ENCODE measurements at regions of chr22 and their contacts with region 1.

Region 1: DNA sequence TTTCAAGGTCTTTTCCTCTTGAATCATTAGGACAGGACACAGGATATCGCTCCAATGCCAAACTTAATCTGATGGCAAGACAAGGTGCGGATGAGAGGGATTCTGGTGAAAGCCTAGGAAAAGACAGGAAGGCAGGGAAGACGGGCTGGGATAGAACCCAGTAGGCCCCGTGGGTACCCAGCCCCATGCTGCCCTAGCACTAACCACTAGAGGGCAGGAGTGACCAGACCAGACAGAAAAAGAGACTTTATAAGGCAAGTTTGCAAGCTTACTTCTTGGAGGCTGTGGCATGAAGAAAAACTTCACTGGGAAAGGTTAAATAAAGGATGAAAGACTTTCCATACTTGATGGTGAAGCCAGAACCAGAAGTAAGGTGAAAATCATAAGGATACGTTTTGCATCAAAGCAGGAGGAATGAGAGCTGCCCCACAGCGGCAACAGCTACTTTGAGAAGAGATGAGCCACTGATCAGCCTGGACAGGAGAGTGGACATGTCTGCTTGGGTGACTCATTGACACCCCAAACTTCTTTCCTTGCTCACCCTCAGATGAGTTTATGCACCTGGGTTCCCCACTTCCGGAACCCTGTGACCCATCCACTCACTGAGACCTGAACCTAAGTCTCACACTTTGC is 39.8 kb downstream of the SYN3 start:
- DNase-seq: no peak
- H3K4me3 Mint-ChIP-seq: no peak overlapping the region
- H3K27ac Mint-ChIP-seq: no peak overlapping the region
- H3K4me1 Mint-ChIP-seq: no peaks in the 10 kb centered on the region
- H3K27me3 Mint-ChIP-seq: no peaks in the 10 kb centered on the region

Region 2: DNA sequence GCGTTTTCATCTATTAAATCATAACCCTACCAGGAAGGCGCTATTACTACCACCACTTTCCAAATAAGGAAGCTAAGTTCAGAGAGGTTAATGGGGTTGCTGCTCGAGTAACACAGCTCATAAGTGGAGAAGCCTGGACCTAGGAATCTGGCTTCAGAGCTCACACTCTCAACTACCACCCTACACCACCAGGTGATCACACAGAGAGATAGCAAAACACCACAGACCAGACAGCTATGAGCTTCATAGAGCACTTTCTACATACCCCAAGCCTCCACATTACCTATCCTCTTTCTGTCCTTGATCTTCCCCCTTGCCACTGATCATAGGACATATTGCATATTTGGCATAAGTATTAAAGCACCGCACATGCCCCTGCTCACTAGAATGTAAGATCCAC is 151.4 kb before region 1 on chr22:
- intact Hi-C with region 1: no loop called
- DNase-seq: no peak
- H3K4me3 Mint-ChIP-seq: no peak overlapping the region
- H3K27ac Mint-ChIP-seq: no peak overlapping the region
- H3K4me1 Mint-ChIP-seq: no peaks in the 10 kb centered on the region
- H3K27me3 Mint-ChIP-seq: no peaks in the 10 kb centered on the region

Region 3: DNA sequence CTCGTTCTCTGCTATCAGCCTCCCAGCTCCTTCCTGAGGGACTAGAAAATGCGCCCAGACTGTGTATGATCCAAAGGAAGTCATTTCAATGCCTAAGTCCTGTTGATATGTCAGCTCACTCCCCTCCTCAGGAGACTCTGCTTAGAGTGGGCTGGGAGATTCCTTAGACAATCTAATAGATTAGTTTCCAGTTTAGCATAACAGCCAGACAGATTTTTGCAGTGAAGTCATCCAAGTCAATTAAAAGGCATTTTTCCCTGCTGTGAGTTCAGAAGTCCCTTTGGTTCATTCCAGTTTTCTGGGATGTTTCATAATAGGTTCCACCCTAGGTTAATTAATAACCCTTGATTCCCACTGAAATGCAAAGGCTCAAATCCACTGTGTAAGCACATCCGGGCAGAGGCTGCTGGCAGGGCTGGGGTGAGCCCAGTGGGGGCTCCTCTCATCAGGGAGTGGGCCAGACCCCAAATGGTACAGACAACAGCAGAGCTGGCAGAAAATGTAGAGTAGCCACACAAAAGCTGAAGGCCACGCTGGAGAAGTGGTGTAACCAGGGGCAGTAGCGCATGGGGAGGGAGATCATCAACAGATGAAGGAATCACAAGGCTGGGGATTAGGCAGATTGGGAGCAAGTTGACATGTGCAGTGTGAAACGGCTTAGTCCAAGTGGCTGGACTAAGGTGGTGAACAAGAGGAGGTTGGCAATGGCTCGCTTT is 50.8 kb before region 1 on chr22:
- intact Hi-C with region 1: no loop called
- DNase-seq: no peak
- H3K4me3 Mint-ChIP-seq: no peak overlapping the region
- H3K27ac Mint-ChIP-seq: no peak overlapping the region
- H3K4me1 Mint-ChIP-seq: no peaks in the 10 kb centered on the region
- H3K27me3 Mint-ChIP-seq: no peaks in the 10 kb centered on the region

Region 4: DNA sequence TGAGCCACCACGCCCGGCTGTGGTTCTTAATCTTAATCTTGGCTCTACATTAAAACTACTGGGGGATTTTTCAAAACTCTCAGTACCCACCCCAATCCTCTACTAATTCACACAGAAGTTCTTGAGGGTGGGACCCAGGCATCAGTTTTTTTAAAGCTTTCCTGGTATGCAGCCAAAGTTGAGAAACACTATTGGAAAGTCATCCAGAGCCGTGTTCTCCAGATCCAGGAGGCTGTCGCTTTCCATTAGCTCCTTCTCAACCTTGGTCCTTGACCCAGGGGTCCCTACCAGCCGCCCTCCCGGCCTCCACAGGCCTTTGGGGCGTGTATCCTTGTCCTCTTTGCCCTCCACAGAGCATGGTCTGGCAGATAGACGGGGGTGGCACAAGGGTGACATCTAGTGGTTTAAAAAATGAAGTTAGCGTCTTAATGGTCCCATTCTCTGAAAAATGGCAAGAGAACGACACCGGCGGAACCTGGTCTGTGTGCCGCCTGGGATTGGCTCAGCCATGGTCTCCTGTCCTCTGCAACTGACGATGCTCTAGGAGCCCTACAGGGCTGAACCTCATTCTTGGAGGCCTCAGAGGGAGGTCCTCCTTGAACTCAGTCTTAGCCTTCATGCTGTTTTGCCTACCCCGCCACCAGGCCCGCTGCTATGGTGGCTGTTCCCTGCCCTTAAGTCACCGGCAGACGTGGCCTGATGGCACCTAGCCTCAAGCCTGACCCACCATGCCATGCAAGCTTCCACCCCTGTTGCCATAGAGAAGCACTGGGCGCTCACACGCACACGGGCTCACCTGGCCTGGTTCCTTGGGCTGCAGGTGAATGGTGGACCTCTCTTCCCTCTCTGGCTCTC is 191.8 kb after region 1 on chr22:
- intact Hi-C with region 1: loop called (anchors 5 kb)
- DNase-seq: no peak
- H3K4me3 Mint-ChIP-seq: no peak overlapping the region
- H3K27ac Mint-ChIP-seq: no peak overlapping the region
- H3K4me1 Mint-ChIP-seq: no peaks in the 10 kb centered on the region
- H3K27me3 Mint-ChIP-seq: no peaks in the 10 kb centered on the region

Measured in activated T-helper 2 cell treated with anti-CD3 and anti-CD28 coated beads, Interferon-gamma antibody, Interleukin-2, Interleukin-4, amounts not matched to agents 10 μg/mL and 5 μg/mL and 100 μg/mL, durations not matched to agents 14 hours and 24 hours and 36 hours (primary cell).